ENCODE measurements at regions of chr7 and their contacts with region 1.

Region 1: DNA sequence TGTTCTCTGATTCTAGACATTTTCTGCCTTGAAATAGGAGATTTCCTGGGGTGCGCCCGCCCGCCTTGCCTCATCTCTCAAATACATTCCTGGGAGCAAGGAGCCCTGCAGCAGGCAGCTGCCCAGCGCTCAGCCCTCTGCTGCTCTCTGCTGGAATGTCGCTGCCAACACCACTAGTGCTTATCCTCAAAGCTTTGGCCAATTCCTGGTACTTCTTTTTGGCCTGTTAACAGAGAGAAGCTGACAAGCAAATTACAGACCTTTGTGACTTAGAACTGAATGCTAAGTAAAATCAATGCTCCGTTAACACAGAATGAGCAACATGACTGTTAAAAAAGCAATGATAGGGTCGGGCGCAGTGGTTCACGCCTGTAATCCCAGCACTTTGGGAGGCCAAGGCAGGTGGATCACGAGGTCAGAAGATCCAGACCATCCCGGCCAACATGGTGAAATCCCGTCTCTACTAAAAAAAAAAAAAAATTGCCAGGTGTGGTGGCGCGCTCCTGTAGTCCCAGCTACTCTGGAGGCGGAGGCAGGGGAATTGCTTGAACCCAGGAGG is 41.9 kb upstream of the SYPL1 start:
- DNase-seq: peak; percentile 84
- ATAC-seq: peak; percentile 89
- H3K4me3 ChIP-seq: peak overlapping the region in 4 of 5 experiments; percentile 2 to 38 (median 32)
- H3K4me3 Mint-ChIP-seq: peak overlapping the region; percentile 84
- H3K27ac ChIP-seq: no peak overlapping the region
- H3K27ac Mint-ChIP-seq: peak overlapping the region; percentile 62
- H3K4me1 ChIP-seq: peaks cover 34 to 48% of the 10 kb centered on the region in 2 donors
- H3K4me1 Mint-ChIP-seq: peaks cover 48% of the 10 kb centered on the region
- H3K27me3 ChIP-seq: no peaks in the 10 kb centered on the region
- H3K27me3 Mint-ChIP-seq: no peaks in the 10 kb centered on the region
- CTCF ChIP-seq: peak; percentile 95

Region 2: GRCh38 chr7:105060437-105060836 is 1093.5 kb before region 1 on chr7:
- CTCF ChIA-PET with region 1: no interaction called
- POLR2A ChIA-PET with region 1: no interaction called
- intact Hi-C with region 1: no loop called
- DNase-seq: no peak
- ATAC-seq: no peak
- H3K4me3 ChIP-seq: no peak overlapping the region
- H3K4me3 Mint-ChIP-seq: no peak overlapping the region
- H3K27ac ChIP-seq: peak overlapping the region in 1 of 2 donors; percentile 39
- H3K27ac Mint-ChIP-seq: no peak overlapping the region
- H3K4me1 ChIP-seq: no peaks in the 10 kb centered on the region
- H3K4me1 Mint-ChIP-seq: peaks cover 49% of the 10 kb centered on the region
- H3K27me3 ChIP-seq: no peaks in the 10 kb centered on the region
- H3K27me3 Mint-ChIP-seq: no peaks in the 10 kb centered on the region
- CTCF ChIP-seq: no peak

Region 3: DNA sequence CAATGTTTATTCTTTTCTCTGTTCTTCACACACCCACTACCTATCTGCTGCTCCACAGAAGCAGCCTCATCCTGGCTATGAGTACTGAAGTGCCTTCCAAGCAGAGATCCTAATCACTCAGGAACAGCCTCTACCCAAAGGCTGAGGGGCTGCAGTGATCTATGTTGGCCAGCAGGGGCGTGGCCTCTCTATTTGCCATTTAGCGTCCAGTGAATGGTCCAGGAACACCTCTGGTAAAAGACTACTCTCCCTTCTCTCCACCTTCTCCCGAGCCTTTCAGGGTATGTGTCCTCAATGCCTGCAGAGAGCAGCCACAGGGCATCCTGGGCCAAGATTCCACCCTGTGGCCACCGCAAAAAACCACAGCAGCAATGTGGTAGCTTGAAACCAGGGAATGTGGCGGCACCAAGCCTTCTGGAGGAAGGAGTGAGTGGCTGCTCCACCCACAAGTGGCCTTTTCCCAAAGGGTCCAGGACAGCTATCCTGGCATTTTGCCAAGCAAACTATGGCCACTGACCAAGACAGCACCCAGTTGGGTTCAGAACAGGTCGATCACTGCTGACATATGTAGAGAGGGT is 112.7 kb before region 1 on chr7:
- CTCF ChIA-PET with region 1: interaction called, 77 read pairs
- POLR2A ChIA-PET with region 1: interaction called, 3 read pairs
- intact Hi-C with region 1: loop called (anchors 1 kb)
- DNase-seq: peak; percentile 62
- ATAC-seq: peak; percentile 61
- H3K4me3 ChIP-seq: no peak overlapping the region
- H3K4me3 Mint-ChIP-seq: no peak overlapping the region
- H3K27ac ChIP-seq: no peak overlapping the region
- H3K27ac Mint-ChIP-seq: peak overlapping the region; percentile 5
- H3K4me1 ChIP-seq: peaks cover 14 to 23% of the 10 kb centered on the region in 2 donors
- H3K4me1 Mint-ChIP-seq: peaks cover 13% of the 10 kb centered on the region
- H3K27me3 ChIP-seq: peaks cover 0 to 9% (median 2%) of the 10 kb centered on the region in 4 experiments
- H3K27me3 Mint-ChIP-seq: no peaks in the 10 kb centered on the region
- CTCF ChIP-seq: peak; percentile 90

Region 4: GRCh38 chr7:106071356-106071998 is 82.5 kb before region 1 on chr7:
- CTCF ChIA-PET with region 1: interaction called, 84 read pairs
- POLR2A ChIA-PET with region 1: no interaction called
- intact Hi-C with region 1: loop called (anchors 5 kb)
- DNase-seq: peak; percentile 90
- ATAC-seq: peak; percentile 87
- H3K4me3 ChIP-seq: peak overlapping the region in 4 of 5 experiments; percentile 33 to 66 (median 45)
- H3K4me3 Mint-ChIP-seq: peak overlapping the region; percentile 85
- H3K27ac ChIP-seq: peak overlapping the region; percentile 95 to 97
- H3K27ac Mint-ChIP-seq: peak overlapping the region; percentile 99
- H3K4me1 ChIP-seq: peaks cover 96 to 100% of the 10 kb centered on the region in 2 donors
- H3K4me1 Mint-ChIP-seq: peaks cover 94% of the 10 kb centered on the region
- H3K27me3 ChIP-seq: no peaks in the 10 kb centered on the region
- H3K27me3 Mint-ChIP-seq: no peaks in the 10 kb centered on the region
- CTCF ChIP-seq: no peak

Region 5: DNA sequence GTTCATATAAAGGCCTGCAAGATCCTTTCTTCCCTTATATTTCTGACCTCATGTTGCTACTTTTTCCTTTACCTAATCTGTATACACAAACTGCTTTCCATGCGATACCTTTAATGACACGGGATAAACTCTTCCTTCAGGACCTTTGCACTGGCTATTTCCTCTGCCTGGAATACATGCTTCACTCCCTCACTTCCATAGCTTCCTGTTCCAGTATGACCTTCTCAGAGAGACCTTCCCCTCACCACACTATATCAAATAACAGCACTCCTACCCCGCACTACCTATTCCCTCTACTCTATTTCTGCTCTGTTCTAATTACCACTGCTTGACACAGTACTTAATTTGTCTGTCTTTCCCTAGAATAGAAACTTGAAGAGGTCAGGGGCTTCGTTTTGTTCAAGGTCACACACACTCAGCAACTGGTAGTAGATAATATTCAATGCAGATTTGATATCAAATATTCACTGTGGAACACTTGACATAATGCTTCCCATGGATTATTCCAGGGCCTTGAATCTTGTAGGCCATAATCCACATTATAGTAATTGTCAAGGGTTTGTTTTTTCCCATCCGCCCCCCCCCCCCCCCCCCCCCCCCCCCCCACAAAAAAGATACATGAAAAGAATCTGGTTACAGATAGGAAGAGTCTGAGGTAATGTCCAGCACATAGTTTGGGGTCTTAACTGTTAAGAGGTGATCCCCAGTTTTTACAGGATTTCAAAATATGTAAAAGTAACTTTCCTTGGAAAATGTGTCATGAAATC is 52.9 kb before region 1 on chr7:
- CTCF ChIA-PET with region 1: interaction called, 53 read pairs
- POLR2A ChIA-PET with region 1: interaction called, 4 read pairs
- intact Hi-C with region 1: no loop called
- DNase-seq: no peak
- ATAC-seq: no peak
- H3K4me3 ChIP-seq: no peak overlapping the region
- H3K4me3 Mint-ChIP-seq: peak overlapping the region; percentile 5
- H3K27ac ChIP-seq: peak overlapping the region in 1 of 2 donors; percentile 69
- H3K27ac Mint-ChIP-seq: peak overlapping the region; percentile 32
- H3K4me1 ChIP-seq: peaks cover 54 to 71% of the 10 kb centered on the region in 2 donors
- H3K4me1 Mint-ChIP-seq: peaks cover 76% of the 10 kb centered on the region
- H3K27me3 ChIP-seq: no peaks in the 10 kb centered on the region
- H3K27me3 Mint-ChIP-seq: no peaks in the 10 kb centered on the region
- CTCF ChIP-seq: no peak

Region 6: GRCh38 chr7:106126170-106126938 is 27.6 kb before region 1 on chr7:
- CTCF ChIA-PET with region 1: interaction called, 22 read pairs
- POLR2A ChIA-PET with region 1: interaction called, 5 read pairs
- intact Hi-C with region 1: no loop called
- DNase-seq: peak; percentile 58
- ATAC-seq: peak; percentile 28
- H3K4me3 ChIP-seq: no peak overlapping the region
- H3K4me3 Mint-ChIP-seq: no peak overlapping the region
- H3K27ac ChIP-seq: no peak overlapping the region
- H3K27ac Mint-ChIP-seq: no peak overlapping the region
- H3K4me1 ChIP-seq: peaks cover 7 to 9% of the 10 kb centered on the region in 2 donors
- H3K4me1 Mint-ChIP-seq: peaks cover 18% of the 10 kb centered on the region
- H3K27me3 ChIP-seq: no peaks in the 10 kb centered on the region
- H3K27me3 Mint-ChIP-seq: no peaks in the 10 kb centered on the region
- CTCF ChIP-seq: no peak

Measured in B cell (primary cell).